GM12878 (cell line): ENCODE measurements at regions of chr1 and their contacts with region 1.

Region 1: DNA sequence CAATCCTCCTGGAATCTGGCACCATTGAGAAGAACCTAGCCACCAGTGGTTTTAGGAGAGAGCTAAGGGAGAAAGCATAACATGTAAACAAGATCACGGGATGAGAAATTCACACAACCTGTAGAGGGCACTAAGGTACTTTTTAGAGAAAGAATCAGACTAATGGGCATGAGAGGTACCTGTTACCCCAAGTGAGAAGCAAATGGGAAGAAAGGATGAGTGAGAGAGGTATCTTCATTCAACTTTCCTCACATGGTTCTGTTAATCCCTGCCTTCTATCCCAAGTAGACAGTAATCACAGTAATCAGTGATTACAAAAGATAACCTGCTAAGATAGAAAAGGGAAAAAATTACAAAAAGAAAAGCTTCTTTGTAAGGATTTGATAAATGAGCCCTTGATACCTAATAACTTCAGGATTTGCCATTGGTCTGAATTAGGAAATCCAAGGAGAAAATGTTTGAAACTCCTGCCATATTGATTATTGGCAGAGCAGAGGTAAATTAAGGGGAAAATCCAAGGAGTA is 251.1 kb upstream of the ADGRL2 start:
- DNase-seq: peak; percentile 35
- ATAC-seq: peak; percentile 78
- H3K4me3 ChIP-seq: no peak overlapping the region
- H3K27ac ChIP-seq: peak overlapping the region; percentile 14
- H3K4me1 ChIP-seq: peaks cover 32% of the 10 kb centered on the region
- H3K27me3 ChIP-seq: no peaks in the 10 kb centered on the region
- CTCF ChIP-seq: peak; percentile 58 to 67 (median 63)
- EP300 ChIP-seq: peak in 1 of 2 experiments; percentile 41; a peak in 1 of 4 replicates
- POLR2A ChIP-seq: no peak
- RAD21 ChIP-seq: peak; percentile 78

Region 2: GRCh38 chr1:81574408-81574807 is 24.7 kb after region 1 on chr1:
- CTCF ChIA-PET with region 1: interaction called, 14 read pairs
- POLR2A ChIA-PET with region 1: interaction called, 4 read pairs
- RAD21 ChIA-PET with region 1: interaction called, 9 read pairs
- SMC1A ChIA-PET with region 1: interaction called, 210 read pairs
- in situ Hi-C with region 1: no loop called
- intact Hi-C with region 1: loop called (anchors 2 kb)
- DNase-seq: no peak
- ATAC-seq: no peak
- H3K4me3 ChIP-seq: no peak overlapping the region
- H3K27ac ChIP-seq: no peak overlapping the region
- H3K4me1 ChIP-seq: no peaks in the 10 kb centered on the region
- H3K27me3 ChIP-seq: peaks cover 0 to 3% of the 10 kb centered on the region in 2 experiments; a peak in 1 of 4 replicates
- CTCF ChIP-seq: no peak
- EP300 ChIP-seq: no peak
- POLR2A ChIP-seq: no peak
- RAD21 ChIP-seq: no peak

Region 3: GRCh38 chr1:81606656-81607055 is 57.0 kb after region 1 on chr1:
- CTCF ChIA-PET with region 1: interaction called, 60 read pairs
- POLR2A ChIA-PET with region 1: interaction called, 4 read pairs
- RAD21 ChIA-PET with region 1: interaction called, 36 read pairs
- SMC1A ChIA-PET with region 1: interaction called, 161 read pairs
- in situ Hi-C with region 1: no loop called
- intact Hi-C with region 1: no loop called
- DNase-seq: no peak
- ATAC-seq: no peak
- H3K4me3 ChIP-seq: no peak overlapping the region
- H3K27ac ChIP-seq: no peak overlapping the region
- H3K4me1 ChIP-seq: no peaks in the 10 kb centered on the region
- H3K27me3 ChIP-seq: no peaks in the 10 kb centered on the region
- CTCF ChIP-seq: no peak
- EP300 ChIP-seq: no peak
- POLR2A ChIP-seq: no peak
- RAD21 ChIP-seq: no peak

Region 4: DNA sequence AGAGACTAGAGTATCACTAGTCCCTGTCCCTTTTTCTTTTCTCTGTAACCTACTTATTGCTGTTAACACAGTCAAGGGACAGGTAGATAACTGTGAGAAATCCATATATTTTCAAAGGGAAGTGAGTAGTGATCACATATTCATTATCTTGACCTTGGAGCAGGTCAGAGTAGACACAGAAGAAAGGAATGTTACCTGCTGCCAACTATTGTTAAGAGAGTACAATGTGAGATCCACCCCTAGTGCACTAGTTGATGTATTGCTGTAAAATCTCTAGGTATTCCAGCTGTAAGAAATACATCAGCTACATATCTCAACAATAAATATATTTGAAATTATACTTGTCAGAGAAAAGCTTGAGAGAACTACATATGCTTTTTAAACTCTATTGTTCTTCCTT is 182.3 kb after region 1 on chr1:
- CTCF ChIA-PET with region 1: interaction called, 5 read pairs
- POLR2A ChIA-PET with region 1: no interaction called
- RAD21 ChIA-PET with region 1: interaction called, 4 read pairs
- SMC1A ChIA-PET with region 1: interaction called, 11 read pairs
- in situ Hi-C with region 1: no loop called
- intact Hi-C with region 1: no loop called
- DNase-seq: no peak
- ATAC-seq: no peak
- H3K4me3 ChIP-seq: no peak overlapping the region
- H3K27ac ChIP-seq: no peak overlapping the region
- H3K4me1 ChIP-seq: no peaks in the 10 kb centered on the region
- H3K27me3 ChIP-seq: no peaks in the 10 kb centered on the region
- CTCF ChIP-seq: no peak
- EP300 ChIP-seq: no peak
- POLR2A ChIP-seq: no peak
- RAD21 ChIP-seq: no peak

Region 5: GRCh38 chr1:81781749-81782148 is 232.1 kb after region 1 on chr1:
- CTCF ChIA-PET with region 1: interaction called, 20 read pairs
- POLR2A ChIA-PET with region 1: no interaction called
- RAD21 ChIA-PET with region 1: no interaction called
- SMC1A ChIA-PET with region 1: interaction called, 34 read pairs
- in situ Hi-C with region 1: no loop called
- intact Hi-C with region 1: no loop called
- DNase-seq: no peak
- ATAC-seq: no peak
- H3K4me3 ChIP-seq: no peak overlapping the region
- H3K27ac ChIP-seq: no peak overlapping the region
- H3K4me1 ChIP-seq: no peaks in the 10 kb centered on the region
- H3K27me3 ChIP-seq: no peaks in the 10 kb centered on the region
- CTCF ChIP-seq: no peak
- EP300 ChIP-seq: no peak
- POLR2A ChIP-seq: no peak
- RAD21 ChIP-seq: no peak